Esophagus squamous epithelium (tissue), 5 donors: ENCODE measurements at regions of chr7 and their contacts with region 1.

Region 1: GRCh38 chr7:105652359-105652993 is 71.2 kb upstream of the EFCAB10 start:
- DNase-seq: no peak
- H3K4me3 ChIP-seq: no peak overlapping the region
- H3K27ac ChIP-seq: no peak overlapping the region
- H3K4me1 ChIP-seq: peaks cover 0 to 55% (median 18%) of the 10 kb centered on the region in 3 donors
- H3K27me3 ChIP-seq: no peaks in the 10 kb centered on the region
- CTCF ChIP-seq: peak; percentile 55 to 88 (median 82)
- POLR2A ChIP-seq: no peak

Region 2: DNA sequence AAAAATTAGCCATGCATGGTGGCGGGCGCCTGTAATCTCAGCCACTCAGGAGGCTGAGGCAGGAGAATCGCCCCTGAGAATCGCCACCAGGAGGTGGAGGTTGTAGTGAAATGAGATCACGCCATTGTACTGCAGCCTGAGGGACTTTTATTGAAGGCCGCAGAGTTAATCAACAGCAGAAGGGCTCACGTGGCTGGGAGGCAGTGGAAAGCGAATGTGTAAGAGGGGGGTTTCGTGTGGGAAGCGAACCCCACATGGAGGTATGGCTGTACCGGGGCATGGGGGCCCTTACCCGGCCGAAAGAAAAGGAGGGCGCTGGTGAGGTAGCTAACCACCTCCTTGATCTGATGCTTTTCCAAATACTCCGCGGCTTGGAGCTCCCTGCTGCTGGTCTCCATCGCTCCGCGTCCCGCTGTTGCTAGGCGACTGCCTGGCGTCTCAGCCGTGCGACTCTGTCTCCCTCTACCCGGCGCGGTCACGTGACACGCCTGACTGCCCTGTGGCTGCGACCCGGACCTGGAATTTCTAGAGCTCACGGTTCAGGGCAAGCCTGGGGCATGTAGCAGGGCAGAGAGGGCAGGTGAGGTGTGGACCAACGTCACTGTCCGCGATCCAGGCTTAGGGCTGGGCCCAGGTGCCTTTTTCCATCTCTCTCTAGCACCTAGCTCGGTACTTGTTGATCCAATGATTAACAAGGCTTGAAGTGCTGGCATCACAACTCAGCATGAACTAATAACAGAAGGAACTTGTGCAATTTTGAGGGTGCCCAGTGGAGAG is 71.2 kb before region 1 on chr7 and contains the start of gene EFCAB10:
- intact Hi-C with region 1: no loop called
- DNase-seq: no peak
- H3K4me3 ChIP-seq: peak within 1 kb of the TSS in 3 of 4 donors; percentile 4 to 54 (median 29)
- H3K27ac ChIP-seq: no peak within 1 kb of the TSS
- H3K4me1 ChIP-seq: peaks cover 0 to 8% (median 4%) of the 10 kb centered on the region in 3 donors
- H3K27me3 ChIP-seq: peaks cover 0 to 9% (median 0%) of the 10 kb centered on the region in 4 donors
- CTCF ChIP-seq: no peak
- POLR2A ChIP-seq: no peak
- total RNA-seq, gene EFCAB10: not detected

Region 3: GRCh38 chr7:106031300-106032035 is 379.0 kb after region 1 on chr7:
- intact Hi-C with region 1: loop called (anchors 10 kb)
- DNase-seq: no peak
- H3K4me3 ChIP-seq: no peak overlapping the region
- H3K27ac ChIP-seq: no peak overlapping the region
- H3K4me1 ChIP-seq: peaks cover 0 to 12% (median 0%) of the 10 kb centered on the region in 3 donors
- H3K27me3 ChIP-seq: peaks cover 0 to 2% (median 0%) of the 10 kb centered on the region in 4 donors
- CTCF ChIP-seq: no peak
- POLR2A ChIP-seq: no peak